ENCODE measurements at regions of chr12 and their contacts with region 1.

Region 1: GRCh38 chr12:131177599-131177998 is 223.9 kb downstream of the ADGRD1 start:
- DNase-seq: no peak
- H3K4me3 ChIP-seq: no peak overlapping the region
- H3K27ac ChIP-seq: no peak overlapping the region
- H3K4me1 ChIP-seq: no peaks in the 10 kb centered on the region
- H3K27me3 ChIP-seq: no peaks in the 10 kb centered on the region
- CTCF ChIP-seq: no peak
- EP300 ChIP-seq: no peak
- POLR2A ChIP-seq: no peak

Region 2: GRCh38 chr12:131213896-131214442 is 36.4 kb after region 1 on chr12:
- in situ Hi-C with region 1: no loop called
- intact Hi-C with region 1: loop called (anchors 2 kb)
- DNase-seq: no peak
- H3K4me3 ChIP-seq: no peak overlapping the region
- H3K27ac ChIP-seq: no peak overlapping the region
- H3K4me1 ChIP-seq: no peaks in the 10 kb centered on the region
- H3K27me3 ChIP-seq: peaks cover 20% of the 10 kb centered on the region
- CTCF ChIP-seq: no peak
- EP300 ChIP-seq: no peak
- POLR2A ChIP-seq: no peak